CD8-positive, alpha-beta T cell (primary cell): ENCODE measurements at regions of chr5 and their contacts with region 1.

Region 1: GRCh38 chr5:134527146-134527960 is 1.9 kb downstream of the JADE2 start:
- DNase-seq: peak; percentile 41 to 85 (median 70)
- ATAC-seq: peak; percentile 34
- H3K4me3 ChIP-seq: peak overlapping the region; percentile 82 to 87
- H3K4me3 Mint-ChIP-seq: peak overlapping the region; percentile 96
- H3K27ac ChIP-seq: peak overlapping the region; percentile 98
- H3K27ac Mint-ChIP-seq: peak overlapping the region; percentile 94
- H3K4me1 ChIP-seq: peaks cover 57% of the 10 kb centered on the region
- H3K4me1 Mint-ChIP-seq: peaks cover 58% of the 10 kb centered on the region
- H3K27me3 ChIP-seq: no peaks in the 10 kb centered on the region
- H3K27me3 Mint-ChIP-seq: no peaks in the 10 kb centered on the region
- CTCF ChIP-seq: peak; percentile 79

Region 2: DNA sequence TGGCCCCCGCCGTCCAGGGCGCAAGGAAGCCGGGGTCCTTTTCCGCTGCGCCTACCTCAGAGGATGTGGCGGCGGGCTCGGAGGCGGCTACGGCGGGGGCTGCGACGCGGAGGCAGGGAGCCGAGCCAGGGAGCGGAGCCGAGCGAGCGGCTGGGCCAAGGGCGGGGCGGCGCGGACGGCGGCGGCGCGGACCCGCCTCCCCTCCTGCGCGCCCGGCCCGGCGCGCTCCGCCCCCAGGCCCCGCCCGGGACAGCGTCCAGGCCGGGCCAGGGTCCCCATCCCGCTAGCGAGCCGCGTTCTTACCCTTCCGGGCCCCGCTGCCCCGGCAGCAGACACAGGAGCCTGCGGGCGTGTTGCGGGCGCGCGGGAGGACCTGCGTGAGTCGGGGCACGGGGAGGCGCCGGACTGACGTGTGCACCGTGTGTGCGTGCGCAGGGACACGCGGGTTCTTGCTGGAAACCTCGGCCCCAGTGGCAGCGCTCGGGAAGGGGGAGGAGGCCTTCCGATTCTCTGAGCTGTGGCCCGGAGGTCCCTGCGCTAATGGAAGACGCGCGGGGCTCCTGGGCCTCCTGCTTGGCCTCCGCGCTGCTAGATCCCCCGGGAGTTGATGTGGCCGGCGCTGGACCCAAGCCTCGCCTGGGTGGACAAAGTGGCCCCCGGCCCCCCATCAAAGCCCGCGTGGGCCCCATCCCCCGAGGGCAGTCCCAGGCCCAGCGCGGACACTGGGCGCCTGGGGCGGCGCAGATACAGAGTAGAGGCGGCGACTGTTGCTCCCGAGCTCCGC is 522.6 kb before region 1 on chr5 and contains the start of gene VDAC1:
- CTCF ChIA-PET with region 1: no interaction called
- POLR2A ChIA-PET with region 1: interaction called, 3 read pairs
- intact Hi-C with region 1: loop called (anchors 10 kb)
- DNase-seq: peak; percentile 68 to 96 (median 86)
- ATAC-seq: peak; percentile 80
- H3K4me3 ChIP-seq: peak within 1 kb of the TSS; percentile 68 to 81
- H3K4me3 Mint-ChIP-seq: peak within 1 kb of the TSS; percentile 95
- H3K27ac ChIP-seq: peak within 1 kb of the TSS; percentile 81 to 98
- H3K27ac Mint-ChIP-seq: peak within 1 kb of the TSS; percentile 97
- H3K4me1 ChIP-seq: peaks cover 30% of the 10 kb centered on the region
- H3K4me1 Mint-ChIP-seq: peaks cover 43% of the 10 kb centered on the region
- H3K27me3 ChIP-seq: no peaks in the 10 kb centered on the region
- H3K27me3 Mint-ChIP-seq: no peaks in the 10 kb centered on the region
- CTCF ChIP-seq: no peak
- total RNA-seq, gene VDAC1: 68.1 to 71.1 TPM

Region 3: GRCh38 chr5:134370871-134371833 is 156.2 kb before region 1 on chr5 and contains the start of gene UBE2B:
- CTCF ChIA-PET with region 1: interaction called, 9 read pairs
- POLR2A ChIA-PET with region 1: interaction called, 18 read pairs
- intact Hi-C with region 1: loop called (anchors 1 kb)
- DNase-seq: peak; percentile 93 to 100 (median 98)
- ATAC-seq: peak; percentile 72
- H3K4me3 ChIP-seq: peak within 1 kb of the TSS; percentile 88 to 100
- H3K4me3 Mint-ChIP-seq: peak within 1 kb of the TSS; percentile 91
- H3K27ac ChIP-seq: peak within 1 kb of the TSS; percentile 98 to 99
- H3K27ac Mint-ChIP-seq: peak within 1 kb of the TSS; percentile 99
- H3K4me1 ChIP-seq: peaks cover 39% of the 10 kb centered on the region
- H3K4me1 Mint-ChIP-seq: peaks cover 55% of the 10 kb centered on the region
- H3K27me3 ChIP-seq: no peaks in the 10 kb centered on the region
- H3K27me3 Mint-ChIP-seq: no peaks in the 10 kb centered on the region
- CTCF ChIP-seq: no peak
- total RNA-seq, gene UBE2B: 249 to 250 TPM

Region 4: DNA sequence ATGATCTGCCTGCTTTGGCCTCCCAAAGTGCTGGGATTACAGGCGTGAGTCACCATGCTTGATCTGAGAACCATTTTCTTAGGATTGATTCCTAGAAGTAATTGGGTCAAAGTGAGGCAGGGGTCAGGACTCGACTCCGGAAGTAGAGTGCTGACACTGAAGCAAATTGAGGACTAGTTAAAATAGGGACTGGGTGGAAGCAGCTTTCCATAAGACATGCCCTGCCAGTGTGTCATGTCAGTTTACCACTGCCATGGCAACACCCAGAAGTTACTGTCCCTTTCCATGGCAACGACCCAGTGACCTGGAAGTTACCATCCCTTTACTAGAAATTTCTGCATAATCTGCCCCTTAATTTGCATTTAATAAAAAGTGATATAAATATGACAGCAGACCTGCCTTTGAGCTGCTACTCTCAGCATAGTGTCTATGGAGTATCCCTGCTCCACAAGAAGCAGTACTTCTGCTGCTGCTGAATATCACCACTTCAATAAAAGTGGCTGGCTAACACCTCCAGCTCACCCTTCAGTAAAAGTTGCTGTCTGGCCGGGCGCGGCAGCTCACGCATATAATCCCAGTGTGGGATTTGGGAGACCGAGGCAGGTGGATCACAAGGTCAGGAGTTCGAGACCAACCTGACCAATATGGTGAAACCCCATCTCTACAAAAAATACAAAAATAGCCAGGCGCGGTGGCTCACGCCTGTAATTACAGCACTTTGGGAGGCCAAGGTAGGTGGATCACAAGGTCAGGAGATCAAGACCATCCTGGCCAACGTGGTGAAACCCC is 49.7 kb before region 1 on chr5:
- CTCF ChIA-PET with region 1: no interaction called
- POLR2A ChIA-PET with region 1: no interaction called
- intact Hi-C with region 1: loop called in 1 of 2 experiments (anchors 2 kb)
- DNase-seq: no peak
- ATAC-seq: no peak
- H3K4me3 ChIP-seq: no peak overlapping the region
- H3K4me3 Mint-ChIP-seq: no peak overlapping the region
- H3K27ac ChIP-seq: no peak overlapping the region
- H3K27ac Mint-ChIP-seq: no peak overlapping the region
- H3K4me1 ChIP-seq: no peaks in the 10 kb centered on the region
- H3K4me1 Mint-ChIP-seq: no peaks in the 10 kb centered on the region
- H3K27me3 ChIP-seq: no peaks in the 10 kb centered on the region
- H3K27me3 Mint-ChIP-seq: no peaks in the 10 kb centered on the region
- CTCF ChIP-seq: no peak

Region 5: GRCh38 chr5:134555890-134556311 is 28.5 kb after region 1 on chr5:
- CTCF ChIA-PET with region 1: interaction called, 15 read pairs
- POLR2A ChIA-PET with region 1: interaction called, 7 read pairs
- intact Hi-C with region 1: loop called (anchors 1 to 2 kb)
- DNase-seq: peak; percentile 59 to 94 (median 81)
- ATAC-seq: peak; percentile 95
- H3K4me3 ChIP-seq: no peak overlapping the region
- H3K4me3 Mint-ChIP-seq: peak overlapping the region; percentile 58
- H3K27ac ChIP-seq: peak overlapping the region; percentile 19 to 84
- H3K27ac Mint-ChIP-seq: peak overlapping the region; percentile 97
- H3K4me1 ChIP-seq: peaks cover 35% of the 10 kb centered on the region
- H3K4me1 Mint-ChIP-seq: peaks cover 45% of the 10 kb centered on the region
- H3K27me3 ChIP-seq: no peaks in the 10 kb centered on the region
- H3K27me3 Mint-ChIP-seq: no peaks in the 10 kb centered on the region
- CTCF ChIP-seq: no peak

Region 6: DNA sequence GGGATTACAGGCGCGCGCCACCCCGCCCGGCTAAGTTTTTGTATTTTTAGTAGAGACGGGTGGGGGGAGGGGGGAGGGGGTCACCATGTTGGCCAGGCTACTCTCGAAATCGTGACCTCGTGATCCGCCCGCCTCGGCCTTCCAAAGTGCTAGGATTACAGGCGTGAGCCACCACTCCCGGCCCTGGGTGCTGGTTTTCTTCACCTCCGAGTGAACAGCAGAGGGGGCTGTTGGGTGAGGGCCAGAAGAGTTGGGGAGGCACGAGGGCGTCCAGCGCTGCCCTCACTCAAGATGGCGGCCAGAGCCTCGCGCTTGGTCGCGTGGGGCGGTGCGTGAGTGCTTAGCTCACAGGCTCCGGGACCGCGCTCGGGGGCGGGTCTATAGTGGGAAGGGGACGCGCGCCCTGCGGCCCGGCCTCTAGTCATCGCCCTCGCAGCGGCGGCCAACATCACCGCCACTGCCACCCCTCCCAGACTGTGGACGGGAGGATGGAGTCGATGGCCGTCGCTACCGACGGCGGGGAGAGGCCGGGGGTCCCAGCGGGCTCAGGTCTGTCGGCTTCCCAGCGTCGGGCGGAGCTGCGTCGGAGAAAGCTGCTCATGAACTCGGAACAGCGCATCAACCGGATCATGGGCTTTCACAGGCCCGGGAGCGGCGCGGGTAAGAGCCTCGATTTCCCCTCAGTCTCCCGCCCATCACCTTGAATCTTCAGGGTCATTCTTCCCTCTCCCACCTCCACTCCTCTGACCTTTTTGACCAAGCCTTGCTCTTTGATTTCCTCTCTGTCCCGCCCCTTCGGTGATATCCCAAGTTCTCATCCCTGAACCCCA is 211.0 kb after region 1 on chr5 and contains the start of gene CAMLG:
- CTCF ChIA-PET with region 1: no interaction called
- POLR2A ChIA-PET with region 1: no interaction called
- intact Hi-C with region 1: loop called in 1 of 2 experiments (anchors 2 kb)
- DNase-seq: peak; percentile 94 to 99 (median 97)
- ATAC-seq: peak; percentile 97
- H3K4me3 ChIP-seq: peak within 1 kb of the TSS; percentile 89 to 91
- H3K4me3 Mint-ChIP-seq: peak within 1 kb of the TSS; percentile 86
- H3K27ac ChIP-seq: peak within 1 kb of the TSS; percentile 79 to 92
- H3K27ac Mint-ChIP-seq: peak within 1 kb of the TSS; percentile 95
- H3K4me1 ChIP-seq: peaks cover 20% of the 10 kb centered on the region
- H3K4me1 Mint-ChIP-seq: peaks cover 35% of the 10 kb centered on the region
- H3K27me3 ChIP-seq: no peaks in the 10 kb centered on the region
- H3K27me3 Mint-ChIP-seq: no peaks in the 10 kb centered on the region
- CTCF ChIP-seq: peak; percentile 81
- total RNA-seq, gene CAMLG: 52.3 to 56.2 TPM